ENCODE measurements at regions of chr18 and their contacts with region 1.

Region 1: GRCh38 chr18:8301427-8302172 is 307.6 kb upstream of the RAB12 start:
- DNase-seq: no peak
- H3K4me3 ChIP-seq: no peak overlapping the region
- H3K4me1 ChIP-seq: no peaks in the 10 kb centered on the region
- H3K27me3 ChIP-seq: no peaks in the 10 kb centered on the region

Region 2: DNA sequence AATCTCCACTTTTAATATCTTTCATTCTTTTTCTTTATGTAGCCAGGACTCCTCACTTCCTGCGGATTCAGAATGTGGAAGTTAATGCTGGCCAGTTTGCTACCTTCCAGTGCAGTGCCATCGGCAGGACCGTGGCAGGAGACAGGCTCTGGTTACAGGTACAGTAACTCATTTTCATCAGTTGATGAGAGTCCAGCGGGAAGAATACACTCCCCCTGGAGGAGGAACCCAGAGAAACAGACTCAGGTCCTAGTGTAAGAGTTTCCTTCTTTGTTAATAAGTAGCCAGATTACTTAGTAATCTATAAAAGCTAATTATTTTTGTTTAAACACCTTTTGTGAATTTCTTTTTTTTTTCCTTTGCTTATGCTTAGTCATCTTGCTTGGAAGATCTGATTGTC is 375.1 kb before region 1 on chr18:
- in situ Hi-C with region 1: no loop called
- DNase-seq: no peak
- H3K4me3 ChIP-seq: no peak overlapping the region
- H3K4me1 ChIP-seq: no peaks in the 10 kb centered on the region
- H3K27me3 ChIP-seq: no peaks in the 10 kb centered on the region

Region 3: GRCh38 chr18:8084160-8084559 is 217.4 kb before region 1 on chr18:
- in situ Hi-C with region 1: loop called (anchors 25 kb)
- DNase-seq: peak; percentile 3 to 28
- H3K4me3 ChIP-seq: no peak overlapping the region
- H3K4me1 ChIP-seq: no peaks in the 10 kb centered on the region
- H3K27me3 ChIP-seq: no peaks in the 10 kb centered on the region

Region 4: GRCh38 chr18:8424917-8425725 is 123.5 kb after region 1 on chr18:
- in situ Hi-C with region 1: loop called (anchors 25 kb)
- DNase-seq: no peak
- H3K4me3 ChIP-seq: no peak overlapping the region
- H3K4me1 ChIP-seq: no peaks in the 10 kb centered on the region
- H3K27me3 ChIP-seq: no peaks in the 10 kb centered on the region

Measured in HAP-1 (cell line).